BJ (cell line): ENCODE measurements at regions of chr14 and their contacts with region 1.

Region 1: DNA sequence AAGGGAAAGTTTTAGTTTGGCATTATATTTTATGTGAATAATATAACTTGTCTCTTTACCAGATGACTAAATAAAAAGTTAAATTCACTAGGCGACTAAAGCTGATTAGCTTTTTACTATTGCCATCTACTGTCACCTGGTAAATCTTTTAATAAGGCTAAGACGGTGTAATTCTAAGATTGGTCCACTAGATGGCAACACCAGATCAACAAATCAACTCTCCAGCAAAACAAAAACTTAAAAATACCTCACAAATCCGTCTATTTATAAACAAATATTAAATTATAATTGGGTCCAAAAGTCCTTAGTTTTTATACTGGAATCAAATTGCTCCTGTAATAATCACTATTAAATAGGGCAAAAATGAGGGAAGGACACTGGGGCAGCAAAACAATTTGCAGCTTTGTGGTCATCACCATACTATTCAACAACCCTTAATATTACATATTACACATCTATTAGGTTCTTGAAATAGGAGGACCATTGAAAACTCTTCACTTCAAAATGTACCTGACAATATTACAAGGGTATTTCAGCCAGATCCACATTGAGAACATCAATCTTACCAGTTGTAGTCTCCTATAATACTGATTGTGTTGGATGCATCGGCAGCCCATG is 47.9 kb downstream of the GALC start:
- DNase-seq: peak; percentile 9
- H3K4me3 ChIP-seq: no peak overlapping the region
- H3K27me3 ChIP-seq: no peaks in the 10 kb centered on the region
- CTCF ChIP-seq: peak; percentile 63

Region 2: DNA sequence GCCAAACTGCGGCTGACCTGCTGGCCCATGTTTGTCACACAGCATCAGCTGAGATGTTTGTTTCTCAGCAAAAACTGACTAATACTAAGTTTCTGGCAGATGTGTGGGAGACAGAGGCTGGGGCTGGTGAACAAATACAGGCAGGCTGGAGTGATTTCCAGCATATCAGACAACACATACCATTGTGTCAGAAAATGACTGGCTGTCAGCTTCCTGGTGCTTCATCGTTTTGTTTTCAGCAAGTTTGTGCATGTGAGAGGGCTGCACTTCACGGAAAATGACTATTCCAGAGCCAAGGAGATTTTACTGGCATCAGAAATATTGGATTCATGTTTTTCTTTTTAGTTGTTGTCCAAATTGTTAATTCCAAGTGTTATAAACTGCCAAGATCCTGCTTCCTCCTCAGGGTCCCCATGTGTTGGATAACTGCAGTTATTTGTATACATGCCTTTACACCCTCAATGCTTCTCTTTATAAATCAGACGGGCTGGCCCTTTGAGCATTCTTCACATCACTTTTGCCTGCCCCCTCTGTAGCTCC is 97.8 kb before region 1 on chr14:
- CTCF ChIA-PET with region 1: no interaction called
- POLR2A ChIA-PET with region 1: no interaction called
- DNase-seq: no peak
- H3K4me3 ChIP-seq: no peak overlapping the region
- H3K27me3 ChIP-seq: no peaks in the 10 kb centered on the region
- CTCF ChIP-seq: no peak

Region 3: GRCh38 chr14:87864356-87865270 is 80.5 kb before region 1 on chr14:
- CTCF ChIA-PET with region 1: no interaction called
- POLR2A ChIA-PET with region 1: no interaction called
- DNase-seq: no peak
- H3K4me3 ChIP-seq: no peak overlapping the region
- H3K27me3 ChIP-seq: no peaks in the 10 kb centered on the region
- CTCF ChIP-seq: no peak

Region 4: DNA sequence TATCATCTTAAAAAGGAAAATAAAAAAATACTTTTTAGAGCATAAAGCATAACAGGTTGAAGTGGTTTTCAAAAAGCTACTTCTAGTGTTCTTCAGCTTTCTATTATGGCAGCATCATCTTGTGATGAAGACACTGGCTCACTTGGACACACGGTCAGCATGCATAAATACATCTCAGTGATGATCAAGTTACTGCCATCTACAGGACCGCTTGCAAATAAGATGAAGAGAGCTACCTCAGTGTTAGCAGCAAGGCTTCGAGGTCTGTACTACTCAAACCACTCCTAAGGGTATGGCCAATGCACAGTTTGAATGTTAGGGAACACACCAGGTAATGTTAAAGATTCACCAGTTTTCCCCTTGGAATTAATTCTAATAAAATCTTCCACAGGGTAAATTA is 10.9 kb before region 1 on chr14:
- CTCF ChIA-PET with region 1: interaction called, 18 read pairs
- POLR2A ChIA-PET with region 1: no interaction called
- DNase-seq: no peak
- H3K4me3 ChIP-seq: no peak overlapping the region
- H3K27me3 ChIP-seq: no peaks in the 10 kb centered on the region
- CTCF ChIP-seq: no peak

Region 5: GRCh38 chr14:88168498-88169165 is 223.5 kb after region 1 on chr14:
- CTCF ChIA-PET with region 1: interaction called, 16 read pairs
- POLR2A ChIA-PET with region 1: no interaction called
- DNase-seq: no peak
- H3K4me3 ChIP-seq: no peak overlapping the region
- H3K27me3 ChIP-seq: no peaks in the 10 kb centered on the region
- CTCF ChIP-seq: peak; percentile 78

Region 6: DNA sequence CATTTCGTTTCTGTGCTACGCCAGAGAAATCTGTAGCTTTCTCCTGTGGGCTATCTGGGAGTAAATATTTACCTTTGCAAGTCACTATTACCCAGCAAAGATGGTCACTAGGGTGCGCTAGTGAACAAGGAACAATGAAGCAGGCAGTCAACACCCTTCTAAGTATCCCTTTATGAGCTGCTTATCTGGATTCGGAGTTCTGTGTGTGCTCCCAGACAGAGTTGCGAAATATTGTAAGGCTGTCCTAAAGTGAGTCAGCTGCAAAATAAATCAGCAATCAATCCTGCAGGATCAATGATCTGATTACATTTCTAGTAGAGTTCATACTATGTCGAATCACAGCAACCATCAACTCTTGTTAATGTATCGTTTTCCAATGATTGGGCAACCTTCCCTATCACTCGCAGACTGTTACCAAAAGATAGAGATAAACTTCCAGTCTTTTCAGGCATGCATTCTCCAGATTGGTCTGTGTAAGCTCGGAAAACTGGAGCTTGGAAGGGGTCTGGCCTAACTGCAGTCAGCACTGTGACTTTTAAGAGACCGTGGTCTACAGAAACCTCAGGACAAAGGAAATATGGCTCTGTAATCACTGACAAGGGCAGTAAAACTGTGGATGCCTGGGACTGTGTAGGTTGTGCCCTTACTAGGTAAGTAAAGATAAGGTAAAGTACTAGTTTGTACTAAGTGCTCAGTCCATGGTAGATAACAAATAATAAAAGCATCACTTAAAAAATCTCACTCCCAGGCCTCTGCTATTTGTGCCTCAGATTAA is 244.5 kb after region 1 on chr14:
- CTCF ChIA-PET with region 1: interaction called, 10 read pairs
- POLR2A ChIA-PET with region 1: no interaction called
- DNase-seq: peak; percentile 41
- H3K4me3 ChIP-seq: no peak overlapping the region
- H3K27me3 ChIP-seq: no peaks in the 10 kb centered on the region
- CTCF ChIP-seq: peak; percentile 76